ENCODE measurements at regions of chr12 and their contacts with region 1.

Region 1: DNA sequence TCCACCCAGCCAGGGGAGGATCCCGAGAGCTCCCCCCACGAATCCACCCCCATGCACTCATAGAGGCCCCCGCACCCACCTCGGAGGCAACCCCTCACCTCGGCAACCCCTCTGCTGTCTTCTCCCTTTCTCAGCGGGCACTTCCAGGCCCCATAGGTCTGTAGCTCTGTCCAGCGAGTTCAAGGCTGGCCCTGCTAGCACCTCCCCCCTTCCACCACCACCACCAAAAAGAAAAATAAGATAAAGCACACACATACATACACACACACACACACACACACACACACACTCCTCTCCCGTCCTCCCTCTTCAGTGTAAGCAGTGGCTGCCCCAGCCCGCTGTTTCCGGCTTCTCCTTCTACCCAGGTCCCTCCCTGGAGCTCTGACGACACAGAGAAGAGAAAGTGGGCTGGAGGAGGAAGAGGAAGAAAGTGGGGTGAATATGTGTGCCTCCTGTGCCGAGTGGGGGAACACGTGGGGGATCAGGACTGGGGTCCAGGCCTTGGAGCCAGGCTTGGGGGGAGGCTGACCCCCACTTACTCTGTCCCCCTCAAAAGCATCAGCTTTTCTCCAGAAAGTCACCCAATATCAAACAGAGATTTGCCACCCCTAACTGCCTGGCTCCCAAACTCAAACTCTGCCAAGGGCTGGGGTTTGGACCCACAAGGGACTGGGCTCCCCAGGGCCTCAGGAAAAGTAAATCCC is at the start of gene STAT6:
- DNase-seq: peak; percentile 62 to 95 (median 84)
- ATAC-seq: peak; percentile 63 to 72
- H3K4me3 Mint-ChIP-seq: peak within 1 kb of the TSS; percentile 89 to 99 (median 96)
- H3K27ac Mint-ChIP-seq: peak within 1 kb of the TSS; percentile 94 to 99 (median 98)
- H3K4me1 Mint-ChIP-seq: peaks cover 33 to 52% (median 50%) of the 10 kb centered on the region in 4 donors
- H3K27me3 Mint-ChIP-seq: peaks cover 0 to 2% (median 0%) of the 10 kb centered on the region in 5 donors
- polyA plus RNA-seq, gene STAT6: 80.2 to 97.1 (median 80.5) TPM

Region 2: DNA sequence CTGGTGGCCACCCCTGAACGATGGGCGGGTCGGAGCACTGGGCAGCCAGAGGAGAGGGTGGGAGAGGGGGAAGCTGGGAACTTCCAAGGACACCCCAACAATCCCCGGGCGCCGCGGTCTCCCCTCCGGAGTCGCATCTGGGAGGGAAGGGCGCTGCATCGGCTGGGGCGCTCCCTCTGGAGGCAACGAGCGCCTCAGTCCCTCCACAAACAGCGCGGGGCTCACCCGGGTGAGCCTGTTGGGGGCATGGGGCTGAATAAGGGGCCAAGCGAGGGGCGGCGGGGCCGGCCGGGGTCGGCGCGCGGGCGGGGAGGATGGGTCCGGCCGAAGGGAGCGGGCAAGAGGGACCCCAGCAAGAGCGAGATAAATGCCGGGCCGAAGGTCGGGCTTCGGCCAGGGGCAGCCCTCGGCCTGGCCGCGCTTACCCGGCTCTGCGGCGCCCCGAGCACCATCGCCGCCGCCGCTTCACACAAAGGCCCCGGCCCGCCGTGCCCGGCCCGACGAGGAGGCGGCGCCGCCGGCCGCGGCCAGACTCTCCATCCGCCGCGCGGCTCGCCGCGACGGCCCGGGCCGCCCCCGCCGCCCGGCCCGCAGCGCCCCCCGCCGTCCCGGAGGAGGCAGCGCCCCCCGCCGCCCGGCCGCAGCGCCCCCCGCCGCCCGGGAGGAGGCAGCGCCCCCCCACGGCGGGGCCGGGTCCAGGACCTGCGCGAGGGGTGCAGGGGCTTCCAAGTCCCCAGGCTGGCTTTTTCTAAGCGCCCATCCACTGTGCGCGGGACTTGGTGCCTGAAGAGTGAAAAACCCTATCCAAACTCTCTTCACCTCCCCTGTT is 105.0 kb before region 1 on chr12 and contains the start of gene ZBTB39:
- POLR2A ChIA-PET with region 1: interaction called, 10 read pairs
- DNase-seq: peak; percentile 48 to 77 (median 74)
- ATAC-seq: peak; percentile 80 to 83
- H3K4me3 Mint-ChIP-seq: peak within 1 kb of the TSS; percentile 88 to 98 (median 95)
- H3K27ac Mint-ChIP-seq: peak within 1 kb of the TSS; percentile 87 to 98 (median 92)
- H3K4me1 Mint-ChIP-seq: peaks cover 30 to 70% (median 56%) of the 10 kb centered on the region in 4 donors
- H3K27me3 Mint-ChIP-seq: no peaks in the 10 kb centered on the region
- polyA plus RNA-seq, gene ZBTB39: 1.7 to 2.8 (median 1.9) TPM

Region 3: DNA sequence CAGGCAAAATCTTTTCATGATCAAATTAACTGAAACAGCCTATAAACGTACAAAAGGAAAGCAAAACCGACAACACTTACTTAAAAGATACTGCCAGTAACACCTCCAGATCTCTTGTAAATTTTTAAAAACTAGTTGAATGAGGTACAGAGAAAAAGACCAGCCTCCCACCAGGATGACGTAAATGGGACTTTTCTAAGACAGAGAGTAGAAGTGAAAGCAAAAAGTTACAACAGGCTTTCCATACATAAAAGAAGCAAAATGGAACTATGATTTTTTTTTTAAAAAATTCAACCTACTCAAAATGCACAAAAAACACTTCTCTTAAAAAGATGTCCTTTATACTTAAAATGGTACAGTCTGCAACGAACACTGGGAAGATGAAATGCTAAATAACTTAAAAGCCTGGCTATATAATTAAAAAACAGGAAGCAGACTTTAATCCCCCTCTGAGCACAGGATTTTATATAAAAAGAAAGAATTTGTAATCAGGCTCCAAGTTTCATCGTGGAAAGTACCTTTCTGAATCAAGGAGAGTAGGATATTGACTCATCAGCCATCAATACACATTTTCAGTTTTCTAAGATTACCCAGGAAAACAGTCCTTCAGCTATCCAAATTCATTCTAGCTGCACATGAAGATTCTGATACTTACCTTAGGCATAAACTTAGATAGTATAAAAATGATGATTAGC is 47.0 kb before region 1 on chr12:
- POLR2A ChIA-PET with region 1: interaction called, 175 read pairs
- DNase-seq: peak in 8 of 10 donors; percentile 60 to 89 (median 72)
- ATAC-seq: peak; percentile 97 to 99
- H3K4me3 Mint-ChIP-seq: peak overlapping the region; percentile 57 to 87 (median 80)
- H3K27ac Mint-ChIP-seq: peak overlapping the region; percentile 73 to 94 (median 91)
- H3K4me1 Mint-ChIP-seq: peaks cover 5 to 32% (median 20%) of the 10 kb centered on the region in 4 donors
- H3K27me3 Mint-ChIP-seq: no peaks in the 10 kb centered on the region

Region 4: DNA sequence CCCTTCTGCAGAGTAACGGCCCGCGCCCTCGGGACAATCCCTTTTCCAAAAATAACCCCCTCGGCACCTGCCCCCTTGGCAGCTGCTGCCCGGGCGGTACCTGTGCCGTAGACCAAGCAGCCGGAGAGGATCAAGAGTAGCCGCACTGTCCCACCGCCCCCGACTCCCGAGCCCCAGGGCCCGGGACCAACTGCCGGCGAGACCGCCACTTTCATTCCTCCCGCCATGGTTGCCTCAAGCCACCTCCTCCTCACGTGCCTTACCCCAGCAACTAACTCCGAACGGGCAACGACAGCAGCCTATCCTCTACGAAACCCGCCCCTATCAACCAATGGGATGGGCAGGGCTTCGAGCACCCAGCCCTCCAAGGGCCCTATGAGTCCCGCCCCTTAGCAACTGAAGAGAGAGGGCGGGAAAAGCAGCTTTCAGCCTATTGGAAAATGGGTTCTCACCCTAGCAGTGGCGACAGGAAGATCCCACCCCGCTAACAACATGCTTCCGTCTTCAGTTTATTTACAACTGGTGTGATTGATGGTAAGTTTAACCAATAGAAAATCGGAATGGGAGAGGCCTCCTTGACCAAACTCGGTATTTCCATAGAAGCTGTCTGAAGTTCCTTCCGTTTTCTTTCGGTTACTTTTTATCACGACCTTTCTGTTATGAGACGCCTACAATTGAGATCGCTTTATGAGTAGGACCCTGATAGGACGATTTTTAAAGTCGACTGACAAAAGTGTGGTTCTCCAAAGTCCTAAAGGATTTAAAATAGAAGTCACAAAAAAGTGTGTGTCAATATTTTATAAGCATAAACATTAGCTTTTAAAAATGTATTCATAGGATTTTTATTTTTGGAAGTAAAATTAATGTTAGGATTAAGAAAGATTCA is 32.4 kb before region 1 on chr12 and contains the start of gene NEMP1:
- POLR2A ChIA-PET with region 1: interaction called, 175 read pairs
- DNase-seq: peak; percentile 81 to 99 (median 96)
- ATAC-seq: peak; percentile 93 to 94
- H3K4me3 Mint-ChIP-seq: peak within 1 kb of the TSS; percentile 92 to 99 (median 94)
- H3K27ac Mint-ChIP-seq: peak within 1 kb of the TSS; percentile 89 to 97 (median 92)
- H3K4me1 Mint-ChIP-seq: peaks cover 3 to 36% (median 19%) of the 10 kb centered on the region in 4 donors
- H3K27me3 Mint-ChIP-seq: no peaks in the 10 kb centered on the region
- polyA plus RNA-seq, gene NEMP1: 2.6 to 5.5 (median 4.1) TPM

Region 5: DNA sequence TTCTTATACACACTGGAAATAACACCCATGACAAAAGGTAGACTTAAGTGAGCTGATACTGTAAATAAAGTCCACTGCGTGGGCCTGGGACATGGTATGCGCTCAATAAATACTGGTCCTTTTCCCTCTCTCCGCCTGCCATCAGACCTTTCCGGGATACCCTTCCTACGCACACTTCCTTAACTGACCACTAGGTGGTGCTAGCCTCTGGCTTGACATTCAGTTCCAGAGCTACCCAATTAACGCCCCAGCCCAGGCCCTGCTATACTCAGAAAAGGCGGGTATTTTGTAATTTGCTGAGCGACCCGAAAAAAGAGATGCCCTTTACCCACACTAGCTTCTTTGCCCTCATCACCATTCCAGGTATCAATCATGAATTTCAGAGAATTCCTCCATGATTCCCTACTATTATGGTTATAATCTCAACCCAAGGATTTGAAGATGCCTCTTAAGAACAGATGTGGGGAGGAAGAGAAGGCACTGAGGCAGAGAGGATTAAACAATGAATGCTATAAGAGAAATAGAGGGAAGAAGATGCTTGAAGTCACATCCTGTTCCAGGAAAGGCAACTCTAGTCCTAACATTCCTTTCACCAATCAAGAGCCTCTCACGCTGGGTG is 13.2 kb after region 1 on chr12:
- POLR2A ChIA-PET with region 1: interaction called, 13 read pairs
- DNase-seq: peak; percentile 53 to 89 (median 76)
- ATAC-seq: peak; percentile 52 to 67
- H3K4me3 Mint-ChIP-seq: peak overlapping the region in 1 of 10 donors; percentile 5
- H3K27ac Mint-ChIP-seq: peak overlapping the region in 3 of 10 donors; percentile 14 to 46 (median 17)
- H3K4me1 Mint-ChIP-seq: peaks cover 8 to 17% (median 12%) of the 10 kb centered on the region in 4 donors
- H3K27me3 Mint-ChIP-seq: peaks cover 0 to 8% (median 0%) of the 10 kb centered on the region in 5 donors

Region 6: GRCh38 chr12:57138526-57139272 is 27.5 kb after region 1 on chr12:
- POLR2A ChIA-PET with region 1: no interaction called
- DNase-seq: peak in 1 of 10 donors; percentile 35
- ATAC-seq: no peak
- H3K4me3 Mint-ChIP-seq: peak overlapping the region in 1 of 10 donors; percentile 56
- H3K27ac Mint-ChIP-seq: no peak overlapping the region
- H3K4me1 Mint-ChIP-seq: peaks cover 7 to 20% (median 15%) of the 10 kb centered on the region in 4 donors
- H3K27me3 Mint-ChIP-seq: peaks cover 0 to under 1% (median 0%) of the 10 kb centered on the region in 5 donors

Measured in naive thymus-derived CD8-positive, alpha-beta T cell (primary cell).